ENCODE measurements at regions of chr11 and their contacts with region 1.

Region 1: DNA sequence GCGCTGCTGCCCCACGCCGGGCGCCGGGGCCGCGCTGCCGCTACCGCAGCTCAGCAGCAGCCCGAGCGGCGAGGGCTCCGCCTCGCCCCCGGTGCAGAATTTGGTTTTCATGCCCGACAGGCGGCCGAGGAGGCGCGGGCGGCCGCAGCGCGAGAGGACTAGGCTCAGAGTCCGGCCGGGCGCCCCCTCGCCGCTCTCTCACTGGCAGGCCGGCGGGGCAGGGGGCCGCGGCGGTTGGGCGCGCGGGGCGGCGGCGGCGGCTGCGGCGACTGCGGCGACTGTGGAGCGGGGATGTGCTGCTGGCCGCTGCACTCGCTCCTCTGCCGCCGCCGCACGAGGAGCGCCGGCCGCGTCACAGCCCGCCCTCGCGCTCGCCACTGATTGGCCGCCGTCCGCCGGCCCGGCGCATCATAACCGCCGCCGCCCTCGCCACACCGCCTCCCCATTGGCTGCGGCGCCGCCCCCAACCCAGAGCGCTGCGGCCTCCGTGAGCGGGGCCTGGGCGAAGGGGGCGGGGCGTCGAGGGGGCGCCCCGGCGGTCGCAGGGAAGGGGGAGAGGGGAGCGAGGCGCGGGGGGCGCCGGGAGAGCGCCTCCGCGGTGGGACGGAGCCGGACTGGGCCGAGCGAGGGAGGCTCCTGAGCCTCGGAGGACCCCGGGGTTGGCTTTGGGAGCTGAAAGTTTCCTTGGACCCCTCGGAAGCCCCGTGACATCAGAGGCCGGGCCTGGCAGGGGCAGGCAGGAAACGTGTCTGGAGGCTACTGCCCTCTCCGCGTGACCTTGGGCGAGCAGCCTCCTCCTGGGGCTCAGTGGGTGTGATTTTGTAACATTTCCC is at the start of gene CHKA:
- DNase-seq: peak; percentile 87 to 90
- ATAC-seq: peak; percentile 86 to 92 (median 90)
- H3K4me3 ChIP-seq: peak within 1 kb of the TSS; percentile 62
- H3K4me3 Mint-ChIP-seq: peak within 1 kb of the TSS; percentile 88
- H3K27ac ChIP-seq: peak within 1 kb of the TSS; percentile 89
- H3K27ac Mint-ChIP-seq: peak within 1 kb of the TSS; percentile 72 to 85
- H3K4me1 ChIP-seq: peaks cover 23% of the 10 kb centered on the region
- H3K4me1 Mint-ChIP-seq: peaks cover 5 to 18% of the 10 kb centered on the region in 2 donors
- H3K27me3 ChIP-seq: no peaks in the 10 kb centered on the region
- H3K27me3 Mint-ChIP-seq: no peaks in the 10 kb centered on the region
- CTCF ChIP-seq: no peak
- total RNA-seq, gene CHKA: 15.8 to 24.6 (median 24.4) TPM

Region 2: GRCh38 chr11:68040101-68040956 is 81.0 kb before region 1 on chr11:
- intact Hi-C with region 1: loop called (anchors 2 kb)
- DNase-seq: peak; percentile 52 to 70
- ATAC-seq: peak; percentile 54 to 68 (median 63)
- H3K4me3 ChIP-seq: peak overlapping the region; percentile 84
- H3K4me3 Mint-ChIP-seq: peak overlapping the region; percentile 91
- H3K27ac ChIP-seq: peak overlapping the region; percentile 94
- H3K27ac Mint-ChIP-seq: peak overlapping the region; percentile 97 to 99
- H3K4me1 ChIP-seq: peaks cover 68% of the 10 kb centered on the region
- H3K4me1 Mint-ChIP-seq: peaks cover 31 to 46% of the 10 kb centered on the region in 2 donors
- H3K27me3 ChIP-seq: no peaks in the 10 kb centered on the region
- H3K27me3 Mint-ChIP-seq: no peaks in the 10 kb centered on the region
- CTCF ChIP-seq: no peak

Region 3: GRCh38 chr11:68081691-68082090 is 39.6 kb before region 1 on chr11:
- intact Hi-C with region 1: no loop called
- DNase-seq: no peak
- ATAC-seq: no peak
- H3K4me3 ChIP-seq: no peak overlapping the region
- H3K4me3 Mint-ChIP-seq: no peak overlapping the region
- H3K27ac ChIP-seq: no peak overlapping the region
- H3K27ac Mint-ChIP-seq: no peak overlapping the region
- H3K4me1 ChIP-seq: peaks cover 4% of the 10 kb centered on the region
- H3K4me1 Mint-ChIP-seq: peaks cover 0 to 6% of the 10 kb centered on the region in 2 donors
- H3K27me3 ChIP-seq: no peaks in the 10 kb centered on the region
- H3K27me3 Mint-ChIP-seq: no peaks in the 10 kb centered on the region
- CTCF ChIP-seq: no peak

Region 4: GRCh38 chr11:68213555-68214174 is 92.4 kb after region 1 on chr11:
- intact Hi-C with region 1: loop called (anchors 2 kb)
- DNase-seq: peak; percentile 86 to 95
- ATAC-seq: peak; percentile 59 to 73 (median 61)
- H3K4me3 ChIP-seq: peak overlapping the region; percentile 89
- H3K4me3 Mint-ChIP-seq: peak overlapping the region; percentile 81
- H3K27ac ChIP-seq: peak overlapping the region; percentile 79
- H3K27ac Mint-ChIP-seq: peak overlapping the region; percentile 85 to 92
- H3K4me1 ChIP-seq: peaks cover 29% of the 10 kb centered on the region
- H3K4me1 Mint-ChIP-seq: peaks cover 46 to 47% of the 10 kb centered on the region in 2 donors
- H3K27me3 ChIP-seq: no peaks in the 10 kb centered on the region
- H3K27me3 Mint-ChIP-seq: peaks cover 0 to 7% of the 10 kb centered on the region in 2 donors
- CTCF ChIP-seq: no peak